ENCODE measurements at regions of chr12 and their contacts with region 1.

Region 1: GRCh38 chr12:82358200-82359114 is at the starts of genes CCDC59 and METTL25:
- DNase-seq: peak; percentile 80
- H3K4me3 ChIP-seq: peak within 1 kb of the TSS; percentile 84
- H3K27me3 ChIP-seq: no peaks in the 10 kb centered on the region
- CTCF ChIP-seq: peak; percentile 100
- polyA plus RNA-seq, gene CCDC59: 6.6 and 17.4 TPM in 2 replicates
- polyA plus RNA-seq, gene METTL25: 2.3 and 3.2 TPM in 2 replicates

Region 2: DNA sequence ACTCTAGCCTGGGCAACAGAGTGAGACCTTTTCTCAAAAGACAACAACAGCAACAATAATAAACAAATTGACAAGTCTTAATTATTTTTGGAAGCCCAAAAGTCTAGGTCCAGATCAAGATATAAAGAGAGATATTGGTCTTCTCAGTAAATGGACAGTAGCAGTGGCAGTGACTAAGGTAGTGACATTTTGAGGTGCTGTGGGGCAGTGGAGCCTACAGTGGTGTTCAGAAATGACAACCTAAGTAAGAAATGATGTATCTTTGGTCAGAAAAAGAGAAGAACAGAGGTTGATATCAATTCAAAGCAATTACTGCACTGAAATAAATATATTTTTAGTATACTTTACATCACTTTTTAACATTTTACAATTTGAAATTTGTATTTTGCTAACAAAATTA is 20.5 kb after region 1 on chr12:
- CTCF ChIA-PET with region 1: interaction called, 11 read pairs
- POLR2A ChIA-PET with region 1: no interaction called
- DNase-seq: no peak
- H3K4me3 ChIP-seq: no peak overlapping the region
- H3K27me3 ChIP-seq: no peaks in the 10 kb centered on the region
- CTCF ChIP-seq: no peak

Region 3: GRCh38 chr12:82660541-82661325 is 302.3 kb after region 1 on chr12:
- CTCF ChIA-PET with region 1: no interaction called
- POLR2A ChIA-PET with region 1: no interaction called
- DNase-seq: no peak
- H3K4me3 ChIP-seq: no peak overlapping the region
- H3K27me3 ChIP-seq: no peaks in the 10 kb centered on the region
- CTCF ChIP-seq: no peak

Measured in BJ (cell line).